Right ventricle myocardium superior (tissue), 1 donor: ENCODE measurements at regions of chr12 and their contacts with region 1.

Region 1: DNA sequence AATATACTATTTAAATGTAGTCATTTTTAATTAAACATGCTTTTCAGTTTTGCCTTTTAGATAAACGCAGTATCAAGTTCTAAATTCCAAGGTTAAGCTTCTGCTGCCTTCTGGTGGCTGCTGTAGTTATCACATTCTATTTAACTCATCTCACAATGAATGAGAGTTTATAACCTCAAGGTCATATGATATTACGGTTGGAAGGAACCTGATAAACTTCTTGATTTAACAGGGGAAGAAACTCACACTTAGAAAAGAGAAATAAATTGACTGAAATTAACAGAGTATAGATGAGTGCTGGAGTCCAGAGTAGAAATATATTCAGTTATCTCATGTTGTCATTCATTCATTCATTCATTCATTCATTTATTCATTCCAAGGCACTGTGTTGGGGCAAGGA is 31.9 kb downstream of the GUCY2C start:
- DNase-seq: no peak
- ATAC-seq: peak; percentile 53

Region 2: GRCh38 chr12:14239350-14239934 is 425.1 kb before region 1 on chr12:
- intact Hi-C with region 1: loop called (anchors 10 kb)
- DNase-seq: no peak
- ATAC-seq: peak; percentile 94

Region 3: DNA sequence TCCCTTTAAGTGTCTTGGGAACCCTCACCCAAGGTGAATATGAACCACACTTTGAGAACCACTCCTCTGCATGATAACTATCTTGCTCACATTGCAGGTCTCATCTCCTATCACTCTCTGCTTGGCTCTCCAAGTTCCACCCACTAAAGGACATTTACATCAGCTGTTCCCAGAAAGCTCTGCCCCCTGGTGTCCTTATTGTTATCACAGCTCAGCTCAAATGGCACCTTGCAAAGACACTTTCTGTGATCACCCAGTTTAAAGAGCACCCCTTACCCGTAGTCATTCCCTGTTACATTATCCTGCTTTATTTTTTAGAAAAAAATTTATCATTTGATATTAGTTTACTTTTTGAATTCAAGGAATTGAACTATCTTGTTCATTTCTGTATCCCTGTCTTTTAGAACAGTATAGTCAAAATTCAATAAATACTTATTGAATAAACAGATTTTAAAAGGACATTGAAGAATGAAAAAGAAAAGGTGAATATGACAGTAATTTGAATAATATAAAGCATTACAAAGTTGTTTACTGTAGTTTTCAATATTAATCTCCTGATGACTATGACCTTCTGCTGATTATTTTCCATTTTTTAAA is 52.4 kb after region 1 on chr12:
- intact Hi-C with region 1: no loop called
- DNase-seq: no peak
- ATAC-seq: peak; percentile 60